Gastrocnemius medialis (tissue), 4 donors: ENCODE measurements at regions of chr9 and their contacts with region 1.

Region 1: GRCh38 chr9:19048966-19049916 is at the start of gene RRAGA:
- DNase-seq: peak; percentile 84 to 89
- ATAC-seq: peak; percentile 94 to 96
- H3K4me3 ChIP-seq: peak within 1 kb of the TSS; percentile 63 to 100 (median 76)
- H3K27ac ChIP-seq: peak within 1 kb of the TSS; percentile 90 to 98 (median 96)
- H3K4me1 ChIP-seq: peaks cover 30 to 42% of the 10 kb centered on the region in 2 donors
- H3K27me3 ChIP-seq: no peaks in the 10 kb centered on the region
- CTCF ChIP-seq: peak; percentile 83 to 96 (median 94)
- POLR2A ChIP-seq: peak; percentile 86 to 87
- total RNA-seq, gene RRAGA: 65.2 to 70.4 (median 65.5) TPM

Region 2: DNA sequence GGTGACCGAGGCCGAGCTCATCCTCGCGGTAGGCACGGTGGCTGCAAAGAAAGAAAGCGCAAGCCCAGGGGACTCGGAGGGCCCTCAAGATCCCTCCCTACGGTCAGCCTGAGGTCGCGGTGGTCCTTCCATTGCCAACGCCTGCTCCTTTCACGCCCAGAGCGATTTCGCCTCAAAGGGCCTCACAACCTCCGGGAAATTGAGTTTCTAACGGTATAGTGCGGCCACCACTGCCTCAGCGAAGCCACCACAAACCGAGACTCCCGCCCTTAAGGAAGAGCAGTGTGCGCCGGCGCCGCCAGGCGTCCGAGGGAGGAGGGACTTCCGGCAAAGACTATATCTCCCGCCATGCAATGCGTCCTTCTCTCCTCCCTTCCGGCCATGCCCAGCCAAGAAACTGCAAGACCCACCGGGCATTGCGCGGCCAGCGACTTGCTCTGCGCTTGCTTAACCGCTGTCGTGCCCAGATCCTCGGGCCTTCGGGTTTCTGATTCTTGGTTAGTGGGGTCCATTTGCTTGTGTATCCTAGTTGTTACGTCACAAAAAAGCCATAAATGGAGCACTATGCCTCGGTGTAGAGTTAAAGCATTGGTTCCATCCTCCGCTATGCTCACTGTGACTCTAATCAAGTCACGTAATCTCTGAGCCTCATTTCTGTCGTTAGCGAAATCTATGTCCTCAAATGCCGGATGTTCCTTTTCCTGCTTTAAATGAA is 53.5 kb after region 1 on chr9 and contains the start of gene HAUS6:
- in situ Hi-C with region 1: no loop called
- intact Hi-C with region 1: loop called (anchors 2 kb)
- DNase-seq: peak; percentile 95 to 97
- ATAC-seq: peak; percentile 97 to 99
- H3K4me3 ChIP-seq: peak within 1 kb of the TSS; percentile 66 to 92 (median 82)
- H3K27ac ChIP-seq: peak within 1 kb of the TSS; percentile 78 to 96 (median 92)
- H3K4me1 ChIP-seq: peaks cover 19 to 21% of the 10 kb centered on the region in 2 donors
- H3K27me3 ChIP-seq: no peaks in the 10 kb centered on the region
- CTCF ChIP-seq: peak; percentile 67 to 80 (median 73)
- POLR2A ChIP-seq: peak; percentile 67 to 71
- total RNA-seq, gene HAUS6: 3.7 to 6.3 (median 5.3) TPM

Region 3: GRCh38 chr9:19174127-19174912 is 125.1 kb after region 1 on chr9:
- in situ Hi-C with region 1: loop called in 2 of 4 experiments (anchors 5 to 10 kb)
- intact Hi-C with region 1: loop called (anchors 1 kb)
- DNase-seq: peak; percentile 62 to 83
- ATAC-seq: peak; percentile 95 to 99
- H3K4me3 ChIP-seq: no peak overlapping the region
- H3K27ac ChIP-seq: peak overlapping the region in 1 of 4 donors; percentile 28
- H3K4me1 ChIP-seq: peaks cover 4 to 15% of the 10 kb centered on the region in 2 donors
- H3K27me3 ChIP-seq: no peaks in the 10 kb centered on the region
- CTCF ChIP-seq: peak in 4 of 5 experiments; percentile 51 to 70 (median 54)
- POLR2A ChIP-seq: no peak

Region 4: GRCh38 chr9:19371942-19372341 is 322.7 kb after region 1 on chr9:
- in situ Hi-C with region 1: loop called in 2 of 4 experiments (anchors 25 kb)
- intact Hi-C with region 1: no loop called
- DNase-seq: no peak
- ATAC-seq: no peak
- H3K4me3 ChIP-seq: no peak overlapping the region
- H3K27ac ChIP-seq: no peak overlapping the region
- H3K4me1 ChIP-seq: no peaks in the 10 kb centered on the region
- H3K27me3 ChIP-seq: no peaks in the 10 kb centered on the region
- CTCF ChIP-seq: no peak
- POLR2A ChIP-seq: no peak

Region 5: DNA sequence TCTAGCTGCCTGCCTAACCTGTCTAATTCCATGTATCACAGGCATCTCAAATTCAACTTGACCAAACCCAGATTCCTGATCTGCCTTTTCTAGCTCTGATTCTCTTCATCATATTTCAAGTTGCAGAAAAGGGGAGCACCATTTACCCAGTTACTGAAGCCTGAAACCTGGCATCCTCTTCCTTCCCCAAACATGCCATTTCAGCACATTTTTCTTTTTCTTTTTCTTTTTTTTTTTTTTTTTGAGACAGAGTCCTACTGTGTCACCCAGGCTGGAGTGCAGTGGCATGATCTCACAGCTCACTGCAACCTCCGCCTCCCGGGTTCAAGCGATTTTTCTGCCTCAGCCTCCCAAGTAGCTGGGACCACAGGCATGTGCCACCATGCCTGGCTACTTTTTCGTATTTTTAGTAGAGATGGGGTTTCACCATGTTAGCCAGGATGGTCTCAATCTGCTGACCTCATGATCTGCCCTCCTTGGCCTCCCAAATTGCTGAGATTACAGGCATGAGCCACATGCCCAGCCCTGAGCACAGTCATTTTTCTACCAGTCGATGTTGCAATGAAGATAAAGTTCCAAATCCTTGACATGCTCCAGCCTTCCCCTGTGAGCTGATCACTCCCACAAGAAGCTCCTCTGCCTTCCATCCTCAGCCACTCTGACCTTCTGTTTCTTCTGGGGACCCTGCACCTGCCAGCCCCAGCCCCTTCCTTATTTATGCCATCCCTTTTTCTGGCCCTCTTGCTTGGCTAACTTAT is 391.8 kb after region 1 on chr9:
- in situ Hi-C with region 1: no loop called
- intact Hi-C with region 1: no loop called
- DNase-seq: no peak
- ATAC-seq: no peak
- H3K4me3 ChIP-seq: no peak overlapping the region
- H3K27ac ChIP-seq: peak overlapping the region in 1 of 4 donors; percentile 36
- H3K4me1 ChIP-seq: no peaks in the 10 kb centered on the region
- H3K27me3 ChIP-seq: no peaks in the 10 kb centered on the region
- CTCF ChIP-seq: no peak
- POLR2A ChIP-seq: no peak

Region 6: GRCh38 chr9:19456996-19457692 is 407.9 kb after region 1 on chr9:
- in situ Hi-C with region 1: loop called in 1 of 4 experiments (anchors 25 kb)
- intact Hi-C with region 1: loop called (anchors 2 kb)
- DNase-seq: peak; percentile 31 to 52
- ATAC-seq: peak; percentile 94 to 99
- H3K4me3 ChIP-seq: peak overlapping the region in 3 of 4 donors; percentile 7 to 15 (median 11)
- H3K27ac ChIP-seq: peak overlapping the region; percentile 1 to 50 (median 30)
- H3K4me1 ChIP-seq: peaks cover 6 to 9% of the 10 kb centered on the region in 2 donors
- H3K27me3 ChIP-seq: no peaks in the 10 kb centered on the region
- CTCF ChIP-seq: peak; percentile 86 to 95 (median 94)
- POLR2A ChIP-seq: no peak